Left colon (tissue), 2 donors: ENCODE measurements at regions of chr7 and their contacts with region 1.

Region 1: DNA sequence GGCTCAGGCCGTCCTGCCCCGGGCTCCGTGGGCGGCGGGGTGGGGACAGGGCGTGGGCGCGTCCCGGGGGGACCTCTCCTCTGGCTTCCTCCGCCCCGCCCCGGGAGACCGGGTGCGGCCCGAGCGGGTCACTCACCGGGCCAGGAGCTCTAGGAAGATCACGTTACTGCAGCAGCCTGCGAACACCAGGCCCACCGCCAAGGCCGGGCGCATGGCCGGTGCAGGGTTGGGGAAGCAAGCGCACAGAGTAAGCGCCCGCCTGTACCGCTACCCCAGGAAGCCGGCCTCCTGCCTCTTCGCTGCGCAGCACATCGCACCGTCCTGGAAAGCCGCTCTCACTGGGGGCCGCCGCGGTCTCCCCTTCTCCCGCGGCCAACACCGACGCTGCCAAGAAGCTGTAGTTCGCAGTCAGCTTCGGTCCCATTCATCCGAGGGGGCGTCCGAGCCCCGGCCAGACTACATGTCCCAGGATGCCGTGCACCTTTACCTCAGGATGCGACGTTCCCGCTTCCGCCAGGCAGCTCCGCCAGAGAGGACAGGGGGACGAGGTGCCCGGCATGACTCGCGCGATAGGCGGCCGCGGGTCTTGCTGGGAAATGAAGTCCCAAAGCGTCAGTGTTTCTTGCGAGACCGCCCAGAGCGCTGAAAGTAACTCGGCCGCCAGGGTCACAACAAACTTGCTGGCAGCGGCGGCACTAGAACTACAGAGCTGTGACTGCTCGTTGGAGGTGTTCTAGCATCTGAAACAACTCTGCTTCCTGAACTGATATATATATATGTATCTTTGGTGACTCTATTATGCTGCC is at the start of gene SLC35B4:
- DNase-seq: peak; percentile 97 to 98
- ATAC-seq: peak; percentile 97
- total RNA-seq, gene SLC35B4: 6.5 to 8.8 TPM

Region 2: DNA sequence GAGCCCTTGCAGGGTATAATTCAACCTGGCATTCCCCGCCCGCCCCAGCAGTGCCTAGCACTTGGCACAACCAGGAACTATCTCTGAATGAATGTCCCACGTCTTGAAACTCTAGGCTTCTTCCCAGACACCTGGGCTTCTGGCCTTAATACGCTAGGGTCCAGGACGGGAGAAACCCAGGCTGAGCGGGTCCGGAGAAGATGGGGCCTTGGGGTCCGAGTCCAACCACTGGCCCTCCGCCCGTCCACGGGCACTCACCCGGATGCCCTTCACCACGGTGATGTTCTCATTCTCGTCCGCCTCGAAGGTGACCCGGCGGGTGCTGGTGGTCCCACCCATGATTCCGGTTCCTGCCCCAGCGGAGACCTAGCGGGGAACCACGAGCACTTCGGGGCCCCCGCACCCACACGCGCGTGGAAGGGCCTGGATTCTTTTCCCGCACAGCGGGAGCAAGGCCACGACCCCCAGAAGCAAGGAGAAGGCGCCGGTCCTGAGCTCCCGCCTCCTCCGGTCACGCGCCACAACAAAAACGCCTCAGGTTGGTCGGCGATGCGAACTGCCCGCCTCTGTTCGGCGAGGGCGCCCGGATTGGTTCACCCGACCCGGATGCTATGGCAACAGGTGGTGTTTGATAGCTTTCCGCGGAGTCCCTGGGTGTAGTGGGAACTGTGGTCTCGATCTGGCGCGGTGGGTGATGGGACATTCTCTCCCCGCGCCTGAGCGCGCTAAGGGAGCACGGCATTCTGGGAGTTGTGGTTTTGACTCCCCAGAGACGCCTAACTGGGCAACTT is 1234.9 kb before region 1 on chr7 and contains the start of gene CHCHD3:
- intact Hi-C with region 1: loop called in 1 of 2 experiments (anchors 10 kb)
- DNase-seq: peak; percentile 96 to 98
- ATAC-seq: peak; percentile 98
- total RNA-seq, gene CHCHD3: 69.3 to 95.6 TPM

Region 3: DNA sequence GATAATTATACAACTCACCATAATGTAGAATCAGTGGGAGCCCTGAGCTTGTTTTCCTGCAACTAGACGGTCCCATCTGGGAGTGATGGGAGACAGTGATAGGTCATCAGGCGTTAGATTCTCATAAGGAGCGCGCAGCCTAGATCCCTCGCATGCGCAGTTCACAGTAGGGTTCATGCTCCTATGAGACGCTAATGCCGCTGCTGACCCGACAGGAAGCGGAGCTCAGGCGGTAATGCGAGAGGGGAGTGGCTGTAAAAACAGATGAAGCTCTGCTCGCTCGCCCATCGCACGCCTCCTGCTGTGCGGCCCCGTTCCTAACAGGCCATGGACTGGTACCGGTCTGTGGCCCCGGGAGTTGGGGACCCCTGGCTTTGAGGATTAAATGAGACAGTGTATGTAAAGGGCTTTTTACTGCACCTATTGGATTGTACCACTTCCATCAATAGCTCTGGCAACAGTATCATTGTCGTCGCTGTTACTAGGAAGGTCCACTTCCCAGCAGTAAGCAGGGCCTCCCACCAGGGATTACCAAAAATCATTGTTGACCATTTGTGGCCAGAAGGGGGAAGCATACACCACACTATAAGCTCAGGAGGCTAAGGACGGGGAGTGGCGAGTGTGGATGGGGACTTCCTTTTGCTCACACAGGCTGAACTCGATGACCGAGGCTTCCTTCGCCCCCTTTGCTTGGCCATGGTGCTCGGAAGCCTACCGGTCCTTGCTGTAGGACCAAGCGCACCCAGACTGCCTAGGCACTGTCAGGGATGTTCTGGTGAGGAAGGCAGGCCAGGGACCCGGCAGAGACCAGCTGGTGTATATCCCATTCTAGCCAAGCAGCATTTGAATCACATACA is 115.8 kb after region 1 on chr7:
- intact Hi-C with region 1: no loop called
- DNase-seq: peak; percentile 88 to 92
- ATAC-seq: peak; percentile 82